PC-3 (cell line): ENCODE measurements at regions of chr3 and their contacts with region 1.

Region 1: GRCh38 chr3:191695131-191695814 is 234.3 kb downstream of the PYDC2 start:
- DNase-seq: no peak
- ATAC-seq: peak; percentile 13
- H3K4me3 ChIP-seq: no peak overlapping the region
- H3K27ac ChIP-seq: peak overlapping the region; percentile 59
- H3K4me1 ChIP-seq: peaks cover 18% of the 10 kb centered on the region
- H3K27me3 ChIP-seq: no peaks in the 10 kb centered on the region
- CTCF ChIP-seq: no peak

Region 2: DNA sequence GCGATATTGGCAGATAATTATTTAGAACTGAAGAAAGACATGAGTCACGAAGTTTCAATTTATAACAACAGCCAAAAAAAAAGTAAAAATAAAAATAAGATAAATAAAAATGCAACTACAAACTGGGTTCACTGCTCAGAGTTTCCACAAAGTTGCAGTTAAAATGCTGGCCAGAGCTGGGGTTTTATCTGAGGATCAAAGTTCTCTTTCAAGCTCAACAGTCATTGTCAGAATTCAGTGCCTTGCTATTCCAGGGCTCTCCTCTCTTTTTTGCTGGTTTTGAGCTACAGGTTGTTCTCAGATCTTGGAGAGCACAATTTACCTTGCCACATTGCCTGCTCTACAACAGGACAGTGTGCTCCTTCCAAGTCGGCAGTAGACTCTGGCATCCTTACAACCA is 174.2 kb before region 1 on chr3:
- CTCF ChIA-PET with region 1: no interaction called
- POLR2A ChIA-PET with region 1: no interaction called
- intact Hi-C with region 1: loop called (anchors 1 kb)
- DNase-seq: no peak
- ATAC-seq: no peak
- H3K4me3 ChIP-seq: no peak overlapping the region
- H3K27ac ChIP-seq: no peak overlapping the region
- H3K4me1 ChIP-seq: no peaks in the 10 kb centered on the region
- H3K27me3 ChIP-seq: peaks cover 53% of the 10 kb centered on the region
- CTCF ChIP-seq: no peak

Region 3: GRCh38 chr3:191762323-191762960 is 67.2 kb after region 1 on chr3:
- CTCF ChIA-PET with region 1: no interaction called
- POLR2A ChIA-PET with region 1: no interaction called
- intact Hi-C with region 1: loop called (anchors 1 kb)
- DNase-seq: peak; percentile 74
- ATAC-seq: peak; percentile 87
- H3K4me3 ChIP-seq: peak overlapping the region; percentile 39
- H3K27ac ChIP-seq: peak overlapping the region; percentile 61
- H3K4me1 ChIP-seq: peaks cover 10% of the 10 kb centered on the region
- H3K27me3 ChIP-seq: peaks cover 19% of the 10 kb centered on the region
- CTCF ChIP-seq: no peak